ENCODE measurements at regions of chr1 and their contacts with region 1.

Region 1: GRCh38 chr1:13828454-13829151 is 128.6 kb downstream of the PRDM2 start:
- DNase-seq: peak; percentile 24
- H3K4me3 Mint-ChIP-seq: no peak overlapping the region
- H3K27ac Mint-ChIP-seq: no peak overlapping the region
- H3K4me1 Mint-ChIP-seq: no peaks in the 10 kb centered on the region
- H3K27me3 Mint-ChIP-seq: no peaks in the 10 kb centered on the region
- CTCF ChIP-seq: no peak

Region 2: GRCh38 chr1:13662493-13662892 is 166.1 kb before region 1 on chr1:
- CTCF ChIA-PET with region 1: no interaction called
- intact Hi-C with region 1: loop called (anchors 1 kb)
- DNase-seq: no peak
- H3K4me3 Mint-ChIP-seq: no peak overlapping the region
- H3K27ac Mint-ChIP-seq: no peak overlapping the region
- H3K4me1 Mint-ChIP-seq: no peaks in the 10 kb centered on the region
- H3K27me3 Mint-ChIP-seq: no peaks in the 10 kb centered on the region
- CTCF ChIP-seq: no peak

Region 3: GRCh38 chr1:13699936-13700520 is 128.6 kb before region 1 on chr1 and contains the start of gene PRDM2:
- CTCF ChIA-PET with region 1: no interaction called
- intact Hi-C with region 1: loop called (anchors 10 kb)
- DNase-seq: peak; percentile 42
- H3K4me3 Mint-ChIP-seq: peak within 1 kb of the TSS; percentile 67
- H3K27ac Mint-ChIP-seq: peak within 1 kb of the TSS; percentile 87
- H3K4me1 Mint-ChIP-seq: peaks cover 7% of the 10 kb centered on the region
- H3K27me3 Mint-ChIP-seq: no peaks in the 10 kb centered on the region
- CTCF ChIP-seq: no peak
- total RNA-seq, gene PRDM2: 26.9 and 29.9 TPM in 2 replicates

Region 4: DNA sequence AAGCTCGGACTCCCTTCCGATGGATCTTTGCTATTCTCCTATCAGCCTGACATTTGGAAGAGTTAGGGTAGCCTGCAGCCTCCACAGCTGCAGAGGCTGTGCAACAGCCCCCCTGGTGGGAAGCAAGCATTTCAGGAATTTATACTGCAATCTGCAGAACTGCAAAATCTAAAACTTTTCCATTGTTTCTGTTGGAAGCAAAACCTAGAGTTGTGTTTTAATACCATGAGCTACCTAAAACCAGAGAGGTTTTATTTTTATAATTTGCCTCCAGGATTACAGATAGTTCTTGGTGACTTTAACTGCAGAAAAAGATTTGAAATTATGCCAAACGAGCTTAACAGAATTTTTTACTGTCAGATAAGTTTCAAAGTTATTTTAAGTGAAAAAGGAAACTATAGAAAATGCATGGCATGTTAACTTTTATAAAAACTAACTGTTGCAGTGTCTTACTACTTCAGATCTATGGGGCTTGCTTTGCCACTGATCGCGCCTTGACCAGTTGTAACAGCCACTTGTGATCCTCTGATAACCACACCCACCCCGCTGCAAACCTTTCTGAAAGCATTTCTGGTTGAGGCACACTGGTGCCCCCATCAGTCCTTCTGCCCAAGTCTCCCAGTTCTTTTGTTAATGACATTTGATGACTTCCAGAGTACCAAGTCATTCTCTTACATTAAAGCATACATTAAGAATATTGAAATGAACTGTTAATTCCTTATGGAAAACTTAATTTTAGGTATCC is 63.8 kb before region 1 on chr1:
- CTCF ChIA-PET with region 1: no interaction called
- intact Hi-C with region 1: no loop called
- DNase-seq: no peak
- H3K4me3 Mint-ChIP-seq: no peak overlapping the region
- H3K27ac Mint-ChIP-seq: no peak overlapping the region
- H3K4me1 Mint-ChIP-seq: peaks cover 15% of the 10 kb centered on the region
- H3K27me3 Mint-ChIP-seq: no peaks in the 10 kb centered on the region
- CTCF ChIP-seq: no peak

Region 5: DNA sequence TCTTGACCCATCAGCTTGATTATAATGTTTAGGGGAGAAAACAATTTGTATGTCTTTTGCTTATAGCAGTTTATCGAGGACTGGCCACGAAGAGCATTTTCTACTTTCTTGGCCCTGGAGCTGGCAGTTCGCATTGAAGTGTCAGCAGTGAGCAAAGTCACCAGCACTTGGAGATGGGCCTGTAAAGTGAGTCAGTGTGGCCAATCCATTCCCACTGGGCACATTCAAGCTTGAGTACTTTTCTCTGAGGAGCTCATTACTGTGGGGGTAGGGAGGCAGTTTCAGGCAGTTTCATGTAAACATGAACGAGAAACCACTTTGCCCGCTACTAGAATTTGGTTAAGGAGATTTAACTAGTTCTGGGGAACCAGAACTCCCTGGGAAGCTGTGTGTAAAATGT is 36.2 kb after region 1 on chr1:
- CTCF ChIA-PET with region 1: no interaction called
- intact Hi-C with region 1: no loop called
- DNase-seq: no peak
- H3K4me3 Mint-ChIP-seq: no peak overlapping the region
- H3K27ac Mint-ChIP-seq: no peak overlapping the region
- H3K4me1 Mint-ChIP-seq: no peaks in the 10 kb centered on the region
- H3K27me3 Mint-ChIP-seq: no peaks in the 10 kb centered on the region
- CTCF ChIP-seq: no peak

Region 6: DNA sequence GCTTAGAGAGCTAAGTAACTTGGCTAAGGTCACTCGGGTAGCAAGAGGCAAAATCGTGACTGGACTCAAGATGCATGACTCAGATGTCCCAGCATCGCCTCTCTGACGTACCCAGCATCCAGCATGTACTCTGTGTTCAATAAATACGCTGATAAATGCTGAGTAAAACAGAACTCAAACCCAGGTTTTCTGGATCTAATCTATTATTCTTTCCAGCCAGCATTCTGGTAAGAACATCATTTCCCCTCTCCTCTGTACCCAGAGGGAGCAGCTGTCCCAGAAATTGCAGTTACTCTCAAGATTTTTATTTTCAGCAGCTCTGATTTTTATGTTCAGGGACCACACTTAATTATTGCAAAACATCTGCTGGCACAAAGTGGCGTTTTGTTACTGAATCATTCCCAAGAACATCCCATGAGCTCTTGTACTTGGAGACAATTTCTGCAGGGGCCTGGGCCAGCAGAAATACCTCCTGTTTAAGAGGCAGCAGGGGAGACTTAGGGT is 120.3 kb after region 1 on chr1:
- CTCF ChIA-PET with region 1: no interaction called
- intact Hi-C with region 1: loop called (anchors 10 kb)
- DNase-seq: no peak
- H3K4me3 Mint-ChIP-seq: no peak overlapping the region
- H3K27ac Mint-ChIP-seq: no peak overlapping the region
- H3K4me1 Mint-ChIP-seq: no peaks in the 10 kb centered on the region
- H3K27me3 Mint-ChIP-seq: no peaks in the 10 kb centered on the region
- CTCF ChIP-seq: no peak

Measured in Calu3 (cell line).